H1 (cell line): ENCODE measurements at regions of chr9 and their contacts with region 1.

Region 1: GRCh38 chr9:98775831-98776441 is 20.4 kb downstream of the ANKS6 start:
- DNase-seq: peak in 1 of 2 experiments; percentile 67
- H3K4me3 ChIP-seq: no peak overlapping the region
- H3K27ac ChIP-seq: no peak overlapping the region
- H3K4me1 ChIP-seq: no peaks in the 10 kb centered on the region
- H3K27me3 ChIP-seq: no peaks in the 10 kb centered on the region
- CTCF ChIP-seq: peak; percentile 52 to 86 (median 83)
- EP300 ChIP-seq: no peak
- POLR2A ChIP-seq: no peak
- RAD21 ChIP-seq: peak; percentile 79 to 86

Region 2: GRCh38 chr9:98315551-98316060 is 460.3 kb before region 1 on chr9:
- CTCF ChIA-PET with region 1: interaction called, 41 read pairs
- POLR2A ChIA-PET with region 1: no interaction called
- DNase-seq: peak; percentile 72 to 97
- H3K4me3 ChIP-seq: no peak overlapping the region
- H3K27ac ChIP-seq: no peak overlapping the region
- H3K4me1 ChIP-seq: peaks cover 0 to 9% (median 7%) of the 10 kb centered on the region in 4 experiments; a peak in 5 of 7 replicates
- H3K27me3 ChIP-seq: no peaks in the 10 kb centered on the region
- CTCF ChIP-seq: peak; percentile 87 to 99 (median 99)
- EP300 ChIP-seq: peak in 1 of 2 experiments; percentile 47; a peak in 1 of 3 replicates
- POLR2A ChIP-seq: no peak
- RAD21 ChIP-seq: peak; percentile 99 to 100

Region 3: DNA sequence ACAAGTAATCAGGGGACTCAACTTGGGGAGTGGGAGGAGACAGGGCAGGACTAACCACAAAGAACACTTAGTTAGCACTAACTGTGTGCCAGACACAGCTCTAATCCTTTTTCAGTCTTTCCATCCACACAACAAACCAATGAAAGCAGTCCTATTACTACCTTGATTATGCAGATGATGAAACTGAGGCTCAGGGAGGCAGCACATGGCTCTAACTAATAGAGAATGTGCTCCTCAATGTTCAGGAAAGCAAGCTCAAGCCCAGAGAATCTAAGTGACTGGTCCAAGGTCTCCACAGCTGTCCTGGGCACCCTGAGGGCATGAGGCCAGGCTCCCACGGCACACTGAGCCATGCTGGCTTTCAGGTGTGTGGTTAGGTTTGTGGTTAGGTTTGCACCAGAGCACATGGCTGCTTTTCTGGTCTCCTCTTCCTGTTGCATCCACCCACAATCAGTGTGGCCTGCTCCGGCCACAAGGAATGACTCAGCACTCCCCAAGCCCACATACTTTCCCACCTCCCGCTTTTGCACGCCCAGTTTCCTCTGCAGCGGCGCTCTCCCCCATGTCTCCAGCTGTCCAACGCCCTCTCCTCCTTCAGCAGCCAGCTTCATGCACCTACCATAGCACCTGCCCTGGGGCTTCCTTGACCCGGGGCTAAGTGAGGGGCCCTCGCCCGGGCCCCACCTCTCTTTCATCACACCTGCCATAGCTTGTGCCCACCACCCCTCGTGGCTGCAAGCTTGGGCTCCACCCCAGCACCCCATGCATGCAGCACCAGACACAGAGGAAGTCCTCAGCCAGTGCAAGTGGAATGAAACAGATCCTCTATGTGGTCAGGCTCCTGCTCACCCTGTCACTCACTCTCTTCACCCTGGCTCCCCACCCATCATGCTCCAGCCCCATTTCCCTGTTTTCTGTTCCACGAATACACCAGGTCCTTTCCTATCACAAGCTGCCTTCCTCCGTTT is 200.3 kb before region 1 on chr9:
- CTCF ChIA-PET with region 1: interaction called, 13 read pairs
- POLR2A ChIA-PET with region 1: no interaction called
- DNase-seq: no peak
- H3K4me3 ChIP-seq: no peak overlapping the region
- H3K27ac ChIP-seq: no peak overlapping the region
- H3K4me1 ChIP-seq: no peaks in the 10 kb centered on the region
- H3K27me3 ChIP-seq: no peaks in the 10 kb centered on the region
- CTCF ChIP-seq: no peak
- EP300 ChIP-seq: no peak
- POLR2A ChIP-seq: no peak
- RAD21 ChIP-seq: no peak

Region 4: GRCh38 chr9:98685726-98686125 is 90.2 kb before region 1 on chr9:
- CTCF ChIA-PET with region 1: no interaction called
- POLR2A ChIA-PET with region 1: no interaction called
- DNase-seq: no peak
- H3K4me3 ChIP-seq: no peak overlapping the region
- H3K27ac ChIP-seq: no peak overlapping the region
- H3K4me1 ChIP-seq: no peaks in the 10 kb centered on the region; a peak in 1 of 7 replicates
- H3K27me3 ChIP-seq: no peaks in the 10 kb centered on the region
- CTCF ChIP-seq: no peak
- EP300 ChIP-seq: no peak
- POLR2A ChIP-seq: no peak
- RAD21 ChIP-seq: no peak

Region 5: DNA sequence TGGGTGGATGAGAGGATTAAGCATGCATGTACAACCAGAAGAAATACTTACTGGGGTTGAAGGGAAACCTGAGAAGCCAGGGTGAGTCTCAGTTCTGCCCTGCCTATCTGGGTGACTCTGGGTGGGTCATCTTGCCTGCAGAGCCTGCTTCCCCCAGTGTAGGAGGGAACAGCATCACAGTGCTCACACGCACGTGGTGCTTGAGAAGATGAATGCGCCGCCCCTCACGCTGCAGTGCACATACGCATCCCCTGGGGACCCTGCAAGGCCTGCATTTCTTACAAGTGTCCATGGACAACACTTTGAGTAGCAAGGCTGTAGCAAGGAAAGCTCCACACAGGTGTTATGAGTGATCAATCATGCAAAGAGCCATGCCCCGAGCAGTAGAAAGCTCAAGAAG is 48.5 kb before region 1 on chr9:
- CTCF ChIA-PET with region 1: interaction called, 16 read pairs
- POLR2A ChIA-PET with region 1: no interaction called
- DNase-seq: no peak
- H3K4me3 ChIP-seq: no peak overlapping the region
- H3K27ac ChIP-seq: no peak overlapping the region
- H3K4me1 ChIP-seq: peaks cover 0 to 3% (median 0%) of the 10 kb centered on the region in 4 experiments; a peak in 2 of 7 replicates
- H3K27me3 ChIP-seq: peaks cover 0 to 7% (median 0%) of the 10 kb centered on the region in 4 experiments; a peak in 4 of 7 replicates
- CTCF ChIP-seq: no peak
- EP300 ChIP-seq: no peak
- POLR2A ChIP-seq: no peak
- RAD21 ChIP-seq: no peak

Region 6: GRCh38 chr9:98742325-98743280 is 33.3 kb before region 1 on chr9:
- CTCF ChIA-PET with region 1: interaction called, 27 read pairs
- POLR2A ChIA-PET with region 1: no interaction called
- DNase-seq: no peak
- H3K4me3 ChIP-seq: no peak overlapping the region
- H3K27ac ChIP-seq: no peak overlapping the region
- H3K4me1 ChIP-seq: no peaks in the 10 kb centered on the region
- H3K27me3 ChIP-seq: no peaks in the 10 kb centered on the region
- CTCF ChIP-seq: no peak
- EP300 ChIP-seq: no peak
- POLR2A ChIP-seq: no peak
- RAD21 ChIP-seq: no peak

Region 7: GRCh38 chr9:98760231-98760630 is 15.7 kb before region 1 on chr9:
- CTCF ChIA-PET with region 1: interaction called, 32 read pairs
- POLR2A ChIA-PET with region 1: interaction called, 5 read pairs
- DNase-seq: no peak
- H3K4me3 ChIP-seq: no peak overlapping the region
- H3K27ac ChIP-seq: no peak overlapping the region
- H3K4me1 ChIP-seq: no peaks in the 10 kb centered on the region
- H3K27me3 ChIP-seq: no peaks in the 10 kb centered on the region
- CTCF ChIP-seq: no peak
- EP300 ChIP-seq: no peak
- POLR2A ChIP-seq: no peak
- RAD21 ChIP-seq: no peak

Region 8: DNA sequence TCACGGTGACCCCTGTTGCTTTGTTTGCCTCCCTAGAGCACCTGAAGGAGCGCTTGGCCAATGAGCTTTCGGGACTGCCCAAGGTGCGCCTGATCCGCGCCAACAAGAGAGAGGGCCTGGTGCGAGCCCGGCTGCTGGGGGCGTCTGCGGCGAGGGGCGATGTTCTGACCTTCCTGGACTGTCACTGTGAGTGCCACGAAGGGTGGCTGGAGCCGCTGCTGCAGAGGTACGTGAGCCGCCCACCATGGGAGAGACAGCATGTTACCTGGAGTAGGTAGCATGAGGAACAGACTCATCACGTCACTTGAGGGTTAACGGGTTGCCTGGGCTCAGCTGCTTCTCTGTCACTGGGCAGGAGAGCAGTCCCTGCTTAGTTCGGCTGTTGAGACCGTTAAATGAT is 50.8 kb after region 1 on chr9:
- CTCF ChIA-PET with region 1: interaction called, 14 read pairs
- POLR2A ChIA-PET with region 1: no interaction called
- DNase-seq: no peak
- H3K4me3 ChIP-seq: no peak overlapping the region
- H3K27ac ChIP-seq: no peak overlapping the region
- H3K4me1 ChIP-seq: no peaks in the 10 kb centered on the region
- H3K27me3 ChIP-seq: no peaks in the 10 kb centered on the region
- CTCF ChIP-seq: no peak
- EP300 ChIP-seq: no peak
- POLR2A ChIP-seq: no peak
- RAD21 ChIP-seq: no peak

Region 9: GRCh38 chr9:98978231-98978681 is 202.3 kb after region 1 on chr9:
- CTCF ChIA-PET with region 1: no interaction called
- POLR2A ChIA-PET with region 1: no interaction called
- DNase-seq: no peak
- H3K4me3 ChIP-seq: no peak overlapping the region
- H3K27ac ChIP-seq: no peak overlapping the region
- H3K4me1 ChIP-seq: peaks cover 0 to 10% (median 6%) of the 10 kb centered on the region in 4 experiments; a peak in 6 of 7 replicates
- H3K27me3 ChIP-seq: peaks cover 7 to 41% (median 27%) of the 10 kb centered on the region in 4 experiments
- CTCF ChIP-seq: no peak
- EP300 ChIP-seq: no peak
- POLR2A ChIP-seq: no peak
- RAD21 ChIP-seq: no peak